Posterior vena cava (tissue), 2 donors: ENCODE measurements at regions of chr2 and their contacts with region 1.

Region 1: GRCh38 chr2:88059979-88060906 is 4.7 kb upstream of the KRCC1 start:
- DNase-seq: no peak

Region 2: DNA sequence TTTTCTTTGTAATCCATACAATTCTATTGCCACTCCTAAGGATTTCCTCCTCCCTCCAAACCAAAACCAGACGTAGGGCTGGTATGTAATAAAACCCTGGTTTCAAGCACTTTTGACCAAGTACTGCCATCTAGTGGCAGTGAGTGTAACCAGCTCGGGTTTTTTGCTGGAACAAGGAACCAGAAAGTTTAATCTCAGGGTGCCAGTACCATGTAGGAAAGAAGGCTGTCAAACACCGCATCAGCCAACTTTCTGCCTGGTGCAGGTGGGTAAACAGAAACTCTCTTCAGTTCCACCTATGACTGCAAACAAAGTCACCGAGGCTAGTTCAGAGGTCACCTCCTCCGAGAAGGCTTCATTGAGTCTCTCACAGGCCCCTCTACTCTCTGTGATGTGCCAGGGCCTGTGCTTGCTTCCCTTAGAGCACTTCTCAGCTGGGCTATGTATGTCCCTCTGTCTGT is 99.7 kb after region 1 on chr2:
- intact Hi-C with region 1: loop called in 1 of 2 experiments (anchors 10 kb)
- DNase-seq: no peak